GM12878 (cell line): ENCODE measurements at regions of chr9 and their contacts with region 1.

Region 1: GRCh38 chr9:129139993-129140396 is 28.8 kb downstream of the PTPA start:
- DNase-seq: peak; percentile 93
- ATAC-seq: peak; percentile 74
- H3K4me3 ChIP-seq: peak overlapping the region; percentile 45
- H3K27ac ChIP-seq: peak overlapping the region; percentile 100
- H3K4me1 ChIP-seq: peaks cover 43% of the 10 kb centered on the region
- H3K27me3 ChIP-seq: no peaks in the 10 kb centered on the region
- CTCF ChIP-seq: no peak
- EP300 ChIP-seq: peak; percentile 92 to 97
- POLR2A ChIP-seq: peak; percentile 68; the same call in 1 of the 2 replicates
- RAD21 ChIP-seq: no peak

Region 2: GRCh38 chr9:129156163-129156562 is 16.2 kb after region 1 on chr9:
- CTCF ChIA-PET with region 1: interaction called, 14 read pairs
- POLR2A ChIA-PET with region 1: no interaction called
- RAD21 ChIA-PET with region 1: interaction called, 4 read pairs
- SMC1A ChIA-PET with region 1: interaction called, 19 read pairs
- in situ Hi-C with region 1: no loop called
- intact Hi-C with region 1: no loop called
- DNase-seq: no peak
- ATAC-seq: no peak
- H3K4me3 ChIP-seq: no peak overlapping the region
- H3K27ac ChIP-seq: no peak overlapping the region
- H3K4me1 ChIP-seq: no peaks in the 10 kb centered on the region
- H3K27me3 ChIP-seq: no peaks in the 10 kb centered on the region
- CTCF ChIP-seq: no peak
- EP300 ChIP-seq: no peak
- POLR2A ChIP-seq: no peak
- RAD21 ChIP-seq: no peak

Region 3: DNA sequence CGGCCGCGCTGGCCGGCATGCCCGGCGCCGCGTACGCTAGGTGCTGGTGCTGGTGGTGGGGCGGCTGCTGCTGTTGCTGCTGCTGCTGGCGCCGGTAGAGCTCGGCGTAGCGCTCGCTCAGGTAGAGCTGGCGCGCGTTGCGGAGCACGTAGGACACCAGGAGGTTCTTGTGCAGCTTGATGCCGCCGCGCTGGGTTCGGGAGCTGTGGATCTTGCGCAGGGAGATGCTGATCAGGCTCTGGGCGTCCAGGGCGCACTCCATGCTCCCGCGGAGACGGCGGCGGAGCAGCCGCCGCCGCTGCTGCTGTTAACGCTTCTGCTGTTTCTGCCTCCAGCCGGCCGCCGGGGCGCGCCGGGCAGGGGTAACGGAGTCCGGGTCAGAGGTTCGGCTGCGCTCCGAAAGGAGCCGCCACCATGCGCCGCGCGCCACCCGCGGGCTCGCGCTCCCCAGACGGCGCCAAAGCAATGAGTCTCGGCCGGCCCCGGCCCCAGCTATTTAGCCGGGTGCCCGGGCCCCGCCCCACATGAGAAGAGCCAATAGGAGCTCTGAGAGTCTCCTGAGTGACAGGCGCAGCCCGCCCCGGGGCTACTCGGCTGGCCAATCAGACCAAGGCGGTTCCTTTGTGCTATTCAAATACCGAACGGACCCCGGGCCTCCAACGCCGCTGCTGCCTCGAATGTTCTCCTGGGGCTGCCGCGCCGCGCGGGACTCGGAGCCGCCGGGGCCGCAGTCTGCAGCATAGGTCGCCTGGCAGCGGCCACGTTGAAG is 38.0 kb after region 1 on chr9 and contains the start of gene IER5L:
- CTCF ChIA-PET with region 1: interaction called, 273 read pairs
- POLR2A ChIA-PET with region 1: interaction called, 10 read pairs
- RAD21 ChIA-PET with region 1: interaction called, 197 read pairs
- SMC1A ChIA-PET with region 1: interaction called, 116 read pairs
- in situ Hi-C with region 1: no loop called
- intact Hi-C with region 1: loop called (anchors 2 kb)
- DNase-seq: no peak
- ATAC-seq: peak; percentile 91
- H3K4me3 ChIP-seq: peak within 1 kb of the TSS; percentile 81
- H3K27ac ChIP-seq: no peak within 1 kb of the TSS
- H3K4me1 ChIP-seq: peaks cover 21% of the 10 kb centered on the region
- H3K27me3 ChIP-seq: peaks cover 0 to 3% of the 10 kb centered on the region in 2 experiments; a peak in 2 of 4 replicates
- CTCF ChIP-seq: no peak
- EP300 ChIP-seq: no peak
- POLR2A ChIP-seq: peak; percentile 96
- RAD21 ChIP-seq: no peak
- polyA plus RNA-seq, gene IER5L: 0.08 to 0.13 TPM

Region 4: GRCh38 chr9:129391221-129391661 is 251.2 kb after region 1 on chr9:
- CTCF ChIA-PET with region 1: no interaction called
- POLR2A ChIA-PET with region 1: no interaction called
- RAD21 ChIA-PET with region 1: no interaction called
- SMC1A ChIA-PET with region 1: no interaction called
- in situ Hi-C with region 1: no loop called
- intact Hi-C with region 1: no loop called
- DNase-seq: no peak
- ATAC-seq: no peak
- H3K4me3 ChIP-seq: no peak overlapping the region
- H3K27ac ChIP-seq: no peak overlapping the region
- H3K4me1 ChIP-seq: no peaks in the 10 kb centered on the region
- H3K27me3 ChIP-seq: no peaks in the 10 kb centered on the region
- CTCF ChIP-seq: no peak
- EP300 ChIP-seq: no peak
- POLR2A ChIP-seq: no peak
- RAD21 ChIP-seq: no peak

Region 5: GRCh38 chr9:129584136-129584535 is 444.1 kb after region 1 on chr9:
- CTCF ChIA-PET with region 1: interaction called, 14 read pairs
- POLR2A ChIA-PET with region 1: interaction called, 5 read pairs
- RAD21 ChIA-PET with region 1: interaction called, 8 read pairs
- SMC1A ChIA-PET with region 1: interaction called, 10 read pairs
- in situ Hi-C with region 1: no loop called
- intact Hi-C with region 1: no loop called
- DNase-seq: peak; percentile 76
- ATAC-seq: peak; percentile 83
- H3K4me3 ChIP-seq: no peak overlapping the region; the same call in 1 of the 2 replicates
- H3K27ac ChIP-seq: peak overlapping the region; percentile 52; the same call in 1 of the 2 replicates
- H3K4me1 ChIP-seq: peaks cover 58% of the 10 kb centered on the region
- H3K27me3 ChIP-seq: no peaks in the 10 kb centered on the region
- CTCF ChIP-seq: no peak
- EP300 ChIP-seq: no peak
- POLR2A ChIP-seq: no peak
- RAD21 ChIP-seq: no peak

Region 6: DNA sequence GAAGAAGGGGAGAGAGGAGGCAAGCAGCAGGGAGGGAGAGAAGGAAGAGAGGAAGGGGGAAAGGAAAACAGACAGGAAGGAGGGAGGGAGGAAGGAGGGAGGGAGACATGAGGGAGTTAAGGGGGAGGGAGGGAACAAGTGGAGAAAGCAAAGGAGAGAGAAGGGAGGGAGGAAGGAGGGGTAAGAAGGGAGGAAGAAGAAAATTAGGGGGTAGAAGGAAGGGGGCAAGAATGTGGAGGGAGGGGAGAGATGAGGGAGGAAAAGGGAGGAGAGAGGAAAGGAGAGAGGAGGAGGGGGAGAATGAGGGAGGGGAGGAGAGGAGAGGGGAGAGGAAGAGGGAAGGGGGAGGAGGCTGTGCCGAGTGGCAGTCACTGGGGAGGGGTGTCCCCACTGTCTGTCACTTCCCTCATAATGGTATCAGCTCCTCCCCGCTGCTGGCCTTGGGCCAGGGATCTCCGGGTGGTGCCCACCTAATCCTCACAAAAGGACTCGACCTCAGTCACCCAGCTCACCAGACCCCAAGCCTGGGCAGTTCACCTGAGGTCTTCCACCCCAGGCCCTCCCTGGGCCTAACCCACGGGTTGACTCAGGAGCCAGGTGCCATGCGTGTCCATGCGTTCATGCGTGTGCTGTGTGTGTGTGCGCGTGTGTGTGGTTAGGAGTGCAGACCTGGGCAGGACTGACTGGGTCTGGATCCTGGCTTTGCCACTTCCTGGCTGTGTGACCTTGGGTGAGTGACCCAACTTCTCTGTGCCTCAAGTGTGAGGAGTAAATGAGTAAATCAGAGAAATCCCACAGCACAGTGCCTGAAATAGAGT is 462.8 kb after region 1 on chr9:
- CTCF ChIA-PET with region 1: interaction called, 33 read pairs
- POLR2A ChIA-PET with region 1: interaction called, 12 read pairs
- RAD21 ChIA-PET with region 1: interaction called, 28 read pairs
- SMC1A ChIA-PET with region 1: interaction called, 9 read pairs
- in situ Hi-C with region 1: no loop called
- intact Hi-C with region 1: no loop called
- DNase-seq: no peak
- ATAC-seq: peak; percentile 77
- H3K4me3 ChIP-seq: no peak overlapping the region
- H3K27ac ChIP-seq: no peak overlapping the region
- H3K4me1 ChIP-seq: peaks cover 12% of the 10 kb centered on the region
- H3K27me3 ChIP-seq: no peaks in the 10 kb centered on the region
- CTCF ChIP-seq: no peak
- EP300 ChIP-seq: 0 out of 4 replicates have a peak, but pooled peaks of 1 of the 2 experiments have one; percentile 19
- POLR2A ChIP-seq: no peak
- RAD21 ChIP-seq: no peak

Region 7: DNA sequence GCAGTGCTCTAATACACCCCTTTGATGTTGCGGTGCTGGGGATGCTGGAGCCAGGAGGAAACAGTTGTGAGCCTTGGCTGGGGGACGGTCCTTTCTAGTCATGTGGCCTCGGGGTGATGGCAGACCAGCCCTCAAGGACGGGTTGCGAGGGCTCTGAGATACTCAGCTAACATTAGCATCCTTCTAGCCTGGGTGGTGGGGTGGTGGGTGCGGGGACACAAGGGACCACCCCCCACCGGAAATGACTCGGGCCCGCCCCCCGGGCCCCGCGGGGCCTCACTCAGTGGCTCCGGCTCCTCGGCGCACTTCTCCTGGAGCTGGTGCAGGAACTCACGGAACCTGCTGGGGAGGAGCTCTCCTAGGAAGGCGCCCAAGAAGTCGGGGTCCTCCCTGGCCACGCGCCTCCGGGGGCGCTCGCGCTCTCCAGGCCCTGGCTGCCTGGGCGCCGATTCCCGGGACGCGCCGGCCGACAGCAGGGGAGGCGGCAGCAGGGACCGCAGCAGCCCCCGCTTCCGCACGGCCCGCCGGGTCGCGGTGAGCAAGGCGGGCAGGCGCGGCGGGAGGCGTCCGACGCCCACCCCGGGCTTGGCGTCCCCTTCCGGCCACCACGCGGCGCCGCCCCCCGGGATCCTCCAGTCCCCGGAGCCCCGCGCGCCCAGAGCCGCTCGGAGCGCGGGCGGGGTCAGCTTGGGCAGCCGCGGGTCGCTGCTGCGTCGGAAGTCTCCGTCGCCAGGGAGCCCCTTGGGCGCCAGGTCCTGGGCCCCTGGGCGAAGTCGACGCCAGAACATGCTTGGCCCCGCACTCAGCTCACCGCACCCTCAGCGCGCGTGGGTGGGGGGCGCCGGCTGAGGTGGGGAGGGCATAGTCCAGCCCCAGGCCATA is 480.0 kb after region 1 on chr9:
- CTCF ChIA-PET with region 1: interaction called, 194 read pairs
- POLR2A ChIA-PET with region 1: interaction called, 21 read pairs
- RAD21 ChIA-PET with region 1: interaction called, 130 read pairs
- SMC1A ChIA-PET with region 1: interaction called, 83 read pairs
- in situ Hi-C with region 1: no loop called
- intact Hi-C with region 1: loop called (anchors 1 kb)
- DNase-seq: no peak
- ATAC-seq: no peak
- H3K4me3 ChIP-seq: no peak overlapping the region
- H3K27ac ChIP-seq: no peak overlapping the region
- H3K4me1 ChIP-seq: peaks cover 6% of the 10 kb centered on the region
- H3K27me3 ChIP-seq: peaks cover 6 to 11% of the 10 kb centered on the region in 2 experiments
- CTCF ChIP-seq: no peak
- EP300 ChIP-seq: no peak
- POLR2A ChIP-seq: no peak
- RAD21 ChIP-seq: no peak

Region 8: GRCh38 chr9:129783516-129784361 is 643.7 kb after region 1 on chr9:
- CTCF ChIA-PET with region 1: no interaction called
- POLR2A ChIA-PET with region 1: no interaction called
- RAD21 ChIA-PET with region 1: no interaction called
- SMC1A ChIA-PET with region 1: no interaction called
- in situ Hi-C with region 1: no loop called
- intact Hi-C with region 1: loop called (anchors 5 kb)
- DNase-seq: peak; percentile 16
- ATAC-seq: peak; percentile 99
- H3K4me3 ChIP-seq: no peak overlapping the region
- H3K27ac ChIP-seq: no peak overlapping the region
- H3K4me1 ChIP-seq: no peaks in the 10 kb centered on the region
- H3K27me3 ChIP-seq: no peaks in the 10 kb centered on the region; a peak in 1 of 4 replicates
- CTCF ChIP-seq: peak; percentile 88 to 94 (median 89)
- EP300 ChIP-seq: no peak
- POLR2A ChIP-seq: no peak
- RAD21 ChIP-seq: peak; percentile 97